H1 (cell line): ENCODE measurements at regions of chr20 and their contacts with region 1.

Region 1: DNA sequence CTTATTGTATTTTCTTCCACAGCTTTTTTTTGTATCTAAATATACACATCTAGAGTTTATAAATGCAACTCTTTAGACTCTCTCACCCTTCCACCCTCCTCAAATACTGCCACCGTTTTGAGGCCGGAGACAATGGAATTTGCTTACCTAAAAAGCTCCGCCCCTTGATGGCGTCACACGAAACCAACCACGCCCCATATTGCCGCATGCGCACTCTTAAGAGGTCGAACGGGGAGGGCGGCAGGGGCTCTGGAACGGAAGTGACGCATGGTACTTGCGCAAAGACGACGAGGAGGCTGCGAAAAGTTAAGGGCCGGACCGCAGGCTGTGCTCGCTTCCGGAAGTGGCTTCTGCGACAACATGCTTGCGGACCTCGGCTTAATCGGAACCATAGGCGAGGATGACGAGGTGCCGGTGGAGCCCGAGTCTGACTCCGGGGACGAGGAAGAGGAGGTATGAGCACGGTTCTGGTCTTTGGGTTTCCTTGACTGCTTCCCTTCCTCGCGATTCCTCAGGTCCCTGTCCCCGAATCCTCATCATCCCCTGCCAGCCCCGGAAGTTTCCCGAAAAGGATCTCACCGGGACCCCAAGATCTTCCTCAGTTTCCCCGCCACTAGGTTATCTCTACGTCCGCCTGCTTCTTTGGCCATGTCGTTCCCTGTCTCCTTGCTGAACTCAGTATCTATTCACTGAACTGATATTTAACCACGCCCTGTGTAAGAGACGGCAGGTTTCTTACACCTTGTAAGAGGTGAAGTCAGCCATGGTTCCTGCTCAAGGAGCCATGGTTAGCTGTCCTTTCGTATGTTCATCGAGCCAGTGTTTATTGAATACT is at the start of gene DDX27:
- DNase-seq: peak; percentile 97 to 99
- H3K4me3 ChIP-seq: peak within 1 kb of the TSS; percentile 78 to 88 (median 85)
- H3K27ac ChIP-seq: peak within 1 kb of the TSS; percentile 74
- H3K4me1 ChIP-seq: peaks cover 0 to 5% (median 3%) of the 10 kb centered on the region in 4 experiments; a peak in 3 of 7 replicates
- H3K27me3 ChIP-seq: no peaks in the 10 kb centered on the region
- CTCF ChIP-seq: no peak
- EP300 ChIP-seq: peak in 1 of 2 experiments; percentile 3; a peak in 1 of 3 replicates
- POLR2A ChIP-seq: peak; percentile 71 to 94
- RAD21 ChIP-seq: no peak
- total RNA-seq, gene DDX27: 49.3 and 51.0 TPM in 2 replicates

Region 2: GRCh38 chr20:49132995-49133478 is 86.3 kb before region 1 on chr20:
- CTCF ChIA-PET with region 1: interaction called, 23 read pairs
- POLR2A ChIA-PET with region 1: interaction called, 5 read pairs
- DNase-seq: no peak
- H3K4me3 ChIP-seq: no peak overlapping the region
- H3K27ac ChIP-seq: no peak overlapping the region
- H3K4me1 ChIP-seq: peaks cover 0 to 6% (median 0%) of the 10 kb centered on the region in 4 experiments; a peak in 3 of 7 replicates
- H3K27me3 ChIP-seq: no peaks in the 10 kb centered on the region
- CTCF ChIP-seq: peak in 2 of 3 experiments; percentile 46 to 58; a peak in 3 of 4 replicates
- EP300 ChIP-seq: no peak
- POLR2A ChIP-seq: no peak
- RAD21 ChIP-seq: peak; percentile 60 to 73

Region 3: GRCh38 chr20:49140411-49140810 is 78.9 kb before region 1 on chr20:
- CTCF ChIA-PET with region 1: interaction called, 23 read pairs
- POLR2A ChIA-PET with region 1: interaction called, 3 read pairs
- DNase-seq: no peak
- H3K4me3 ChIP-seq: no peak overlapping the region
- H3K27ac ChIP-seq: no peak overlapping the region
- H3K4me1 ChIP-seq: no peaks in the 10 kb centered on the region
- H3K27me3 ChIP-seq: no peaks in the 10 kb centered on the region
- CTCF ChIP-seq: no peak
- EP300 ChIP-seq: no peak
- POLR2A ChIP-seq: no peak
- RAD21 ChIP-seq: no peak

Region 4: DNA sequence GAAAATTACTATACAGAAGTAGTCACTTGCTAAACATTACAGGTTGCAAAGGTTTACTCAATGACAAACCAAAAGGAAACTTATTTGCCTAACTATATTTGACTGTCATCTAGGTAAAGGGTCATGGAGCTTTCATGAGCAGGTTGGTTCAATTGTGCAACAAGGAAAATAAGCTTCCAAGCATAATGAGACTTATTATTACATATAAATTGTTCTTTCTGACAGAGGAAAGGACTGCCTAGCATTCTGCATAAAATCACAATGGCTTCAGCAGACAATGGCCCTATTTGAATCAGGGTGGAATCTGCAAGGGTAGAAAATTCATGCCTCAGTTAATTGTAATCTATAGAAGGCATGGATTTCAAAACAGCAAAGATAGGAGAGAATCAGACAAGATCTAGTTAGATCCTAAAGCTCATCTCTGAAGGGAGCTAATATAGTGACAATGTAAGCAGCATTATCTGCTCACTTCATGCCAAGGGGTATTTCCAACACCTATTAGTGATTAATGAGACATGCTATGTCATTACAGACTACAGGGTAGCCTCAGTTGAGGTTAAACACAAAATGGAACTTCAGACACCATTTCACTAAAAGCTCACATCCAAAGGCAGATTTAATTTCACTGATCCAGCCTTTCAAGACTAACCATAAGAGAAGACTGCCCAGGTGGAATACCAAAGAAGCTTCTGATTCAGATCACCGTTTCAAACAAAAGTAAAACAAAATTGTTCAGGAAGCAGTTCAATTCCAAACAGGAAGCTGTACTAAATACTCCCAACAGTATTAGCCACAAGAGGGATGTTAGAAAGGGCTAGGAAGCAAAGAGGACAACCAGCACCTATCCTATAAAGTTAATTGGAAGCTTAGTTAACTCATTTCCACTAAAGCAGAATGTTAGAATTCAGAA is 39.7 kb before region 1 on chr20:
- CTCF ChIA-PET with region 1: interaction called, 16 read pairs
- POLR2A ChIA-PET with region 1: no interaction called
- DNase-seq: no peak
- H3K4me3 ChIP-seq: no peak overlapping the region
- H3K27ac ChIP-seq: no peak overlapping the region
- H3K4me1 ChIP-seq: no peaks in the 10 kb centered on the region; a peak in 1 of 7 replicates
- H3K27me3 ChIP-seq: no peaks in the 10 kb centered on the region
- CTCF ChIP-seq: no peak
- EP300 ChIP-seq: no peak
- POLR2A ChIP-seq: no peak
- RAD21 ChIP-seq: no peak

Region 5: GRCh38 chr20:49207076-49207475 is 12.2 kb before region 1 on chr20:
- CTCF ChIA-PET with region 1: interaction called, 52 read pairs
- POLR2A ChIA-PET with region 1: interaction called, 4 read pairs
- DNase-seq: peak; percentile 25 to 59
- H3K4me3 ChIP-seq: no peak overlapping the region
- H3K27ac ChIP-seq: no peak overlapping the region
- H3K4me1 ChIP-seq: 0 out of 7 replicates have a peak, but pooled peaks cover 0 to 2% (median 0%) of the 10 kb centered on the region in 4 experiments
- H3K27me3 ChIP-seq: no peaks in the 10 kb centered on the region
- CTCF ChIP-seq: peak; percentile 61 to 72 (median 64)
- EP300 ChIP-seq: no peak
- POLR2A ChIP-seq: no peak
- RAD21 ChIP-seq: peak; percentile 52 to 63; a peak in 3 of 4 replicates

Region 6: DNA sequence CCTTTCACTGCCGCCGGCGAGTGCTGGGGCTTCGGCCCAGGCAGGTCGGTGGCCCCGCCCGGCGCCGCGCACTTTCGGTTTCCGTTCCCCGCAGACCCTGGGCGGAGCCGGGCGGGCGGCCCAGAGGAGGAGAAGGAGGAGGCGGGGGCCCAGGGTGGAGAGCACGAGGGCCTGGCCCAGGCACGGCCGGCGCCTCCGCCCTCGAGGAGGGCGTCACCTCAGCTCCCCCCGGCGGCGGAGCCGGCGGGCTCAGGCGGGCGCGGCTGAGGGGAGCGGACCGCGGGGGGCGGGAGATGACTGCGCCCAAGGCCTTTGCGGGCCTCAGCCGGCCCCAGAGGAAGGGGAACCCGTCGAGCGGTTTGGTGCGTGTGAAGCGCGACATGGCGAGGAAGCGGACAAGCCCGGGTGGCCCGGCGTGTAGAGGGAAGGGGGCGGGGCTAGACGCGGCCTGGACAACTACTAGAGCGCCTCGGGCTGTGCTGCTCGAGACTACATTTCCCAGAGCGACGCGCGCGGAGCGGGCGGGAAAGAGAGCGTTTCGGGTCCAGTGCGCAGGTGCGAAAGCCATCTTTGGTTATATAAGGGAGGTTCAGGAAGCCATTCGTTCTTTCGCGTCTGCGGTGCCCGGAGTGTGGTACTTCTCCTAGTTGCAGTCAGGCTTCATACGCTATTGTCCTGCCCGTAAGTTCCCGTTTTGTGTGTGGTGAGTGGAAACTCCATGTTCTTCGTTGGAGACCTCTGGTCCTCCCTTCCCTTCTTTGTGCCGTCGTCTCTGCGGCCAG is 58.9 kb after region 1 on chr20 and contains the start of gene ZNFX1:
- CTCF ChIA-PET with region 1: interaction called, 5 read pairs
- POLR2A ChIA-PET with region 1: interaction called, 13 read pairs
- DNase-seq: peak; percentile 97 to 98
- H3K4me3 ChIP-seq: peak within 1 kb of the TSS; percentile 73 to 97 (median 92)
- H3K27ac ChIP-seq: peak within 1 kb of the TSS; percentile 94
- H3K4me1 ChIP-seq: peaks cover 0 to 8% (median 5%) of the 10 kb centered on the region in 4 experiments; a peak in 3 of 7 replicates
- H3K27me3 ChIP-seq: peaks cover 0 to 1% (median 0%) of the 10 kb centered on the region in 4 experiments; a peak in 1 of 7 replicates
- CTCF ChIP-seq: 0 out of 4 replicates have a peak, but pooled peaks of 1 of the 3 experiments have one; percentile 5
- EP300 ChIP-seq: no peak
- POLR2A ChIP-seq: peak; percentile 100
- RAD21 ChIP-seq: no peak
- total RNA-seq, gene ZNFX1: 11.3 and 13.0 TPM in 2 replicates

Region 7: DNA sequence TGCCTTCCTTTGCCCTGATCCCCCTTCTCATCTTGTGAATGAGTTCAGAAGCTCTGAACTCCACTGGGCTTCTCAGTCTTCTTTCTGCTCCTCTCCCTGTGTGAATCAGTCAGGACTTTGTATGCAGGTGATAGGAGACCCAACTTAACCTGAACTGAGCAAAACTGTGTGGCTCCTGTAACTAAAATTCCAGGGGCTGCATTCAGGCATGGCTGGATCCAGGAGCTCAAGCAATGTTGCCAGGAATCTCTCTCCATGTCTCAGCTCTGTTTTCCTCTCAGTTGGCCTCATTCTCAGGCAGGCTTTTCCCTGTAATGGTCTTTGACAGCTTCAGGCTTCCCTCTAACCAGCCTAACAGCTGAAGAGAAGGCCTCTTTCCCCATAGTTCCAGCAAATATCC is 109.5 kb after region 1 on chr20:
- CTCF ChIA-PET with region 1: no interaction called
- POLR2A ChIA-PET with region 1: no interaction called
- DNase-seq: no peak
- H3K4me3 ChIP-seq: no peak overlapping the region
- H3K27ac ChIP-seq: no peak overlapping the region
- H3K4me1 ChIP-seq: peaks cover 0 to 5% (median 1%) of the 10 kb centered on the region in 4 experiments; a peak in 3 of 7 replicates
- H3K27me3 ChIP-seq: no peaks in the 10 kb centered on the region; a peak in 1 of 7 replicates
- CTCF ChIP-seq: no peak
- EP300 ChIP-seq: no peak
- POLR2A ChIP-seq: no peak
- RAD21 ChIP-seq: no peak

Region 8: GRCh38 chr20:49479785-49480184 is 260.5 kb after region 1 on chr20:
- CTCF ChIA-PET with region 1: no interaction called
- POLR2A ChIA-PET with region 1: no interaction called
- DNase-seq: no peak
- H3K4me3 ChIP-seq: no peak overlapping the region
- H3K27ac ChIP-seq: no peak overlapping the region
- H3K4me1 ChIP-seq: peaks cover 0 to 5% (median under 1%) of the 10 kb centered on the region in 4 experiments; a peak in 2 of 7 replicates
- H3K27me3 ChIP-seq: peaks cover 0 to 10% (median 7%) of the 10 kb centered on the region in 4 experiments; a peak in 5 of 7 replicates
- CTCF ChIP-seq: no peak
- EP300 ChIP-seq: no peak
- POLR2A ChIP-seq: no peak
- RAD21 ChIP-seq: no peak